Right cardiac atrium (tissue), 5 donors: ENCODE measurements at regions of chr14 and their contacts with region 1.

Region 1: GRCh38 chr14:89973234-89973823 is 17.6 kb downstream of the TDP1 start:
- DNase-seq: peak; percentile 61 to 79 (median 78)
- ATAC-seq: peak; percentile 85 to 90
- H3K4me3 ChIP-seq: no peak overlapping the region
- H3K27ac ChIP-seq: no peak overlapping the region
- H3K4me1 ChIP-seq: no peaks in the 10 kb centered on the region
- H3K27me3 ChIP-seq: no peaks in the 10 kb centered on the region

Region 2: DNA sequence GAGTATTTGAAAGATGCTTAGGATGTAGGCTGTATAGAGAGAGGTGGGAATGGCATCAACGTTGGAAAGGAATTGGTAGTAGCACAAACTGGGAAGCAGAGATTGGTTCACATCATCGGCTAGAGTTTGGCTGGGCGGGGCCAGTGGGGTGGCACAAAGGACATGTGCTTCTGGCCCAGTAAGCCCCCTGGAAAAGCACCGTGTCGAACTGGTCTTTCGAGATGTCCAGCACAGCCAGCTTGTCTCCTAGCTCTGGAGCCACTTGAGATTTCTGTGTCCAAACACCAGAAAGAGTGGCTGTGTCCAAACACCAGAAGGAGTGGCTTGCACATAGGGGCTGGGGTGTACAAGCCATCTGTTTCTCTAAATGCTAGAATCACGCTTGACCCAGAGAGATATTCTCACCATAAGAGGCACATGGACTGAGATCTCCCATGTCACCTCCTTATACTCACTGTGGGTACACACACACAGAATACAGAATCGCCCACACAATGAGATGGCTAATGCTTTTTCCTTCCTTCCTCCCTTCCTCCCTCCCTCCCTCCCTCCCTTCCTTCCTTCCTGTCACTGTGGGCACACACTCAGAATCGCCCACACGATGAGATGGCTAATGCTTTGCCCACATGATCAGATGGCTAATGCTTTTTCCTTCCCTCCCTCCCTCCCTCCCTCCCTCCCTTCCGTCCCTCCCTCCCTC is 46.6 kb after region 1 on chr14:
- intact Hi-C with region 1: no loop called
- DNase-seq: no peak
- ATAC-seq: no peak
- H3K4me3 ChIP-seq: no peak overlapping the region
- H3K27ac ChIP-seq: no peak overlapping the region
- H3K4me1 ChIP-seq: no peaks in the 10 kb centered on the region
- H3K27me3 ChIP-seq: no peaks in the 10 kb centered on the region

Region 3: DNA sequence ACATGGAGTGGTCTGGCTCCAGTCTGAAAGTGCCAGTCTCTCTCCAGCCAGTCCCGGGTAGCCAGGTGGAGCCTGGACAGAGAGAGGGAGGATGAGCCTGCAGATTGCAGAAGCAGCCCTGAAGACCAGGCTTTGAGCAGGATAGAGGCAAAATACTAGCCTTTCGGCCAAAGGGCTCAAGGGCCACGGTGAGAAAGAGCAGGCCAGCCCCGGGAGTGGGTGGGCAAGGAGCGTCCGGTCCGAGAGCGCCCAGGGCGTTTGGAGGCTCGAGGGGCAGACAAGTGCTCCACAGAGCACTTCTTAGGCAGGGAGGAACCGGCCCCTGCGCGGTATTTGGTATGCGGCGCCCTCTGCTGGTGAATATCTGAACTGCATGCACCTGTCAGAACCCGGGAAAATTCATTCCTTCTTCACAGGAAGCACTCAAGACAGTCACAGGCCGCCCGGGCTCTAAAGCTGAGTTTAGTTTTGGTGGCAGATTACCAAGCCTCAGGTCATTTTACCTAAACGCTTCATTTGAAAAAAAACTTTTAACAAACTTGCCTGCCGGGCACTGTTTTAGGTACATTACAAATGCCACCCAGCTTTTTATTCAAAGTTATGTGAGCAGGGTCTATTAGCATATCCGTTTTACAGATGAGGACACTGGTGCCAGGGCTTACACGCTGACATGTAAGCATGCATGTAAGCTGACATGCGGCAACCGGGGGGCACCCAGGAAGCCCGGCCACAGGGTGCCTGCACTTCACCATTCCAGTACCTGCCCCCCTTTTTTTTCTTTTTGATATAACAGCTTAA is 262.0 kb after region 1 on chr14:
- intact Hi-C with region 1: loop called (anchors 5 kb)
- DNase-seq: peak; percentile 57 to 84 (median 72)
- ATAC-seq: peak; percentile 81 to 93
- H3K4me3 ChIP-seq: no peak overlapping the region
- H3K27ac ChIP-seq: no peak overlapping the region
- H3K4me1 ChIP-seq: no peaks in the 10 kb centered on the region
- H3K27me3 ChIP-seq: no peaks in the 10 kb centered on the region